ENCODE measurements at regions of chr17 and their contacts with region 1.

Region 1: DNA sequence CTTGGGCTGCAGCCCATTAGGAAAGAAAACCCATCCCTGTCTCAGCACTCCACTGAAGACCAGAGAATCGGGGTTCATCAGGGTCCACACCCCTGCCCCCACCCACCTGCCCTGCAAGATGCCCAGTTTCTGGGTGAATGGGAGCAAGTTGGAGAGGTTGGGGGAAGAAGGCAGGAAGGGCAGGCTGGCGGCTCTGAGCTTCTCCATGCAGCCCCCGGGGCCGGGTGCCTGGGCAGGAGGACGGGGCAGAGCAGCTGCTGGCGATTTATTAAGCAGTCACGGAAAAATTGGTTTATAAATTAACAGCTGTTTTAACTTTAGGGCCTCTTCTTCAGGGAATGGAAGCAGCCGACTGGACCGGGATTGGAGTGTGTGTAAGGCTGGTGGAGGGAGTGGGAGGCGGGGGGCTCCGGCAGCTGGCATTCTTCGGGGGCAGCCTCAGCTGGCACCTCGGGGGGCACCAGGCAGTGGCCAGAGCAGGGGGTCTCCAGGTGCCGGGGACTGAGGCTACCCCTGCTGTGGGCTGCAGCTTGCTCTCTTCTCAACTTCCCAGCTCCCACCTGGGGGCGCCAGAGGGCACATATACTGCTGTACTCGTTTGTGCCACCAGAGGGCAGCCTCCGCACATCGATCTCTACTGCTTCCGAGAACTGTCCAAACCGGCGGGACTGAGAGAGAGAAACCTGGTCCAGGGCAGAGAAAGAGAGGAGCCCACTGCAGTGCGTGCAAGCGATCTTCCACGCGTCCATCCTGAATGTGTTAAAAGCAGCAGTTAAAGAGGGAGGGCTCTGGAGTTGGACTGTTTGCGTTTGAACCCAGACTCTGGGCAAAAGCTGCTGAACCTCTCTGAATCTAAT is 5.0 kb upstream of the PPP1R1B start:
- DNase-seq: peak; percentile 100
- H3K4me3 Mint-ChIP-seq: peak overlapping the region; percentile 18
- H3K27ac Mint-ChIP-seq: peak overlapping the region; percentile 3
- H3K4me1 Mint-ChIP-seq: peaks cover 55% of the 10 kb centered on the region
- H3K27me3 Mint-ChIP-seq: peaks cover 83% of the 10 kb centered on the region
- CTCF ChIP-seq: no peak

Region 2: DNA sequence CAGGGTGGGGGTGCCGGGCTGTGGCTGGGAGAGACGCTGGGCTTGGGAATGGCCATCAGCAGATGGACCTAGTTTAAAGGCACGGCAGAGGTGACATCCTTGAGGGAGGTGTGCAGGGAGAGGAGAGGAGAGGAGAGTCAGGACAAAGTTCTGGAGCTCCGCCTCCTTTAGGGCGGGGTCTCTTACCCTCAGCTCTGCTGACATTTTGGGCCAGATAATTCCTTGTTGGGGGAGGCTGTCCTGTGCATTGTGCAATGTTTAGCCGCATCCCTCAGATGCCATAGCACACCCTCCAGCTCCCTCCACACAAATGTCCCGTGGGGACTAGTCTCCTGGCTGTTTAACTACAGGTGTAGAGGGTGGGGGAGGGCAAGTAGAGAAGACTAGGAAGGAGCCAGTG is 1145.2 kb before region 1 on chr17:
- CTCF ChIA-PET with region 1: no interaction called
- intact Hi-C with region 1: no loop called
- DNase-seq: no peak
- H3K4me3 Mint-ChIP-seq: no peak overlapping the region
- H3K27ac Mint-ChIP-seq: no peak overlapping the region
- H3K4me1 Mint-ChIP-seq: peaks cover 11% of the 10 kb centered on the region
- H3K27me3 Mint-ChIP-seq: no peaks in the 10 kb centered on the region
- CTCF ChIP-seq: no peak

Region 3: GRCh38 chr17:39209317-39210092 is 412.2 kb before region 1 on chr17:
- CTCF ChIA-PET with region 1: interaction called, 4 read pairs
- intact Hi-C with region 1: loop called (anchors 1 kb)
- DNase-seq: peak; percentile 81
- H3K4me3 Mint-ChIP-seq: peak overlapping the region; percentile 55
- H3K27ac Mint-ChIP-seq: peak overlapping the region; percentile 16
- H3K4me1 Mint-ChIP-seq: peaks cover 43% of the 10 kb centered on the region
- H3K27me3 Mint-ChIP-seq: peaks cover 63% of the 10 kb centered on the region
- CTCF ChIP-seq: peak; percentile 13

Region 4: DNA sequence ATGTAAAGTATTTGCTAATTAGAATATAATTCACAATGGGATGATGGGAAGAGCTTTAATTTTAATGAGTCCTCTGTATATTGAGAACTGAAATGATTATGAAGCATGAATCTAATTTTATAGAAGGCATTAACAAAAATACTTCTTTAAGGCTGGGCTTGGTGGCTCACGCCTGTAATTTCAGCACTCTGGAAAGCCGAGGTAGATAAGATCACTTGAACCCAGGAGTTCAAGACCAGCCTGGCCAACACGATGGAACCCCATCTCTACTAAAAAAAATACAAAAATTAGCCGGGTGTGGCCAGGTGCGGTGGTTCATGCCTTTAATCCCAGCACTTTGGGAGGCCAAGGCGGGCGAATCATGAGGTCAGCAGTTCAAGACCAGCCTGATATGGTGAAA is 148.4 kb before region 1 on chr17:
- CTCF ChIA-PET with region 1: no interaction called
- intact Hi-C with region 1: no loop called
- DNase-seq: no peak
- H3K4me3 Mint-ChIP-seq: no peak overlapping the region
- H3K27ac Mint-ChIP-seq: no peak overlapping the region
- H3K4me1 Mint-ChIP-seq: no peaks in the 10 kb centered on the region
- H3K27me3 Mint-ChIP-seq: no peaks in the 10 kb centered on the region
- CTCF ChIP-seq: no peak

Region 5: GRCh38 chr17:39668199-39668966 is 46.6 kb after region 1 on chr17 and contains the start of gene PNMT:
- CTCF ChIA-PET with region 1: interaction called, 42,089 read pairs
- intact Hi-C with region 1: loop called (anchors 1 kb)
- DNase-seq: peak; percentile 100
- H3K4me3 Mint-ChIP-seq: peak within 1 kb of the TSS; percentile 24
- H3K27ac Mint-ChIP-seq: peak within 1 kb of the TSS; percentile 0
- H3K4me1 Mint-ChIP-seq: peaks cover 65% of the 10 kb centered on the region
- H3K27me3 Mint-ChIP-seq: peaks cover 69% of the 10 kb centered on the region
- CTCF ChIP-seq: no peak
- total RNA-seq, gene PNMT: 1.3 and 3.2 TPM in 2 replicates

Region 6: DNA sequence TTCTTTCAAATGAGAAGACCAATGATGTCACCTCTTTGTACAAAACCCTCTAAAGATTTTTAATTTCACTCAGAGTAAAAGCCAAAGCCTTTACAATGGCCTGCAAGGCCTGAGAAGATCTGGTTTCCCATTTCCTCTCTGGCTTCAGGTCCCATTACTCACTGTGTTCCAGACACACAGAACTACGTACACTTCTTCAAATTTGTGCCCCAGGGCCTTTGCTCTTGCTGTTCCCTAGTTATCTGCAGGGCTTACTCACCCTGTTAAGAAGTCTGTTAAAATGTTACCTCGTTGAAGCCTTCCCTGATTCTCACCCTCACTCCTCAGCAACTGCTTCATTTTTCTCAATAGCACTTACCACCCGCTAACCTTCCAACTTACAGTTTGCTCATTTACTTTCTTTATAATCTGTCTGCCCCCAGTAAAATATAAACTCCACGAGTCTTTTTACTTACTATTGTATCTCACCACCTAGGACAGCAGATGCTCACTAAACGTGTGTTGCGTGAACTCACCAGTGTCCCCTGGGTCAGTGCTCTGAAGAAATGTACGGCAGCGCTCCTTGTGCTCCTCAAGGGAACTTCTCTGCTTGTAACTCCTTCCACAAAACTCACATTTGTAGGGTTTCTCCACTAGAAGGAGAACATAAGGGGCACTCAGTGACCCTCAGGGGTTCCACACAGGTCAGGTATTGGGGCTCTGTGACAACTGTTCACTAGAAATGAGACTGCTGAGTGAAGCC is 166.2 kb after region 1 on chr17:
- CTCF ChIA-PET with region 1: interaction called, 1,121 read pairs
- intact Hi-C with region 1: no loop called
- DNase-seq: peak; percentile 80
- H3K4me3 Mint-ChIP-seq: no peak overlapping the region
- H3K27ac Mint-ChIP-seq: no peak overlapping the region
- H3K4me1 Mint-ChIP-seq: peaks cover 29% of the 10 kb centered on the region
- H3K27me3 Mint-ChIP-seq: no peaks in the 10 kb centered on the region
- CTCF ChIP-seq: no peak

Region 7: GRCh38 chr17:39863918-39864746 is 242.4 kb after region 1 on chr17 and contains the start of gene IKZF3:
- CTCF ChIA-PET with region 1: interaction called, 259 read pairs
- intact Hi-C with region 1: loop called (anchors 1 kb)
- DNase-seq: peak; percentile 100
- H3K4me3 Mint-ChIP-seq: peak within 1 kb of the TSS; percentile 67
- H3K27ac Mint-ChIP-seq: peak within 1 kb of the TSS; percentile 31
- H3K4me1 Mint-ChIP-seq: peaks cover 38% of the 10 kb centered on the region
- H3K27me3 Mint-ChIP-seq: peaks cover 53% of the 10 kb centered on the region
- CTCF ChIP-seq: no peak
- total RNA-seq, gene IKZF3: 30.9 and 41.0 TPM in 2 replicates

Region 8: GRCh38 chr17:40015005-40015997 is 393.6 kb after region 1 on chr17 and contains the start of gene CSF3:
- CTCF ChIA-PET with region 1: interaction called, 113 read pairs
- intact Hi-C with region 1: no loop called
- DNase-seq: peak; percentile 66
- H3K4me3 Mint-ChIP-seq: no peak within 1 kb of the TSS
- H3K27ac Mint-ChIP-seq: no peak within 1 kb of the TSS
- H3K4me1 Mint-ChIP-seq: peaks cover 10% of the 10 kb centered on the region
- H3K27me3 Mint-ChIP-seq: peaks cover 74% of the 10 kb centered on the region
- CTCF ChIP-seq: no peak
- total RNA-seq, gene CSF3: 0.38 TPM in 1 of 2 replicates, not detected in the other

Region 9: DNA sequence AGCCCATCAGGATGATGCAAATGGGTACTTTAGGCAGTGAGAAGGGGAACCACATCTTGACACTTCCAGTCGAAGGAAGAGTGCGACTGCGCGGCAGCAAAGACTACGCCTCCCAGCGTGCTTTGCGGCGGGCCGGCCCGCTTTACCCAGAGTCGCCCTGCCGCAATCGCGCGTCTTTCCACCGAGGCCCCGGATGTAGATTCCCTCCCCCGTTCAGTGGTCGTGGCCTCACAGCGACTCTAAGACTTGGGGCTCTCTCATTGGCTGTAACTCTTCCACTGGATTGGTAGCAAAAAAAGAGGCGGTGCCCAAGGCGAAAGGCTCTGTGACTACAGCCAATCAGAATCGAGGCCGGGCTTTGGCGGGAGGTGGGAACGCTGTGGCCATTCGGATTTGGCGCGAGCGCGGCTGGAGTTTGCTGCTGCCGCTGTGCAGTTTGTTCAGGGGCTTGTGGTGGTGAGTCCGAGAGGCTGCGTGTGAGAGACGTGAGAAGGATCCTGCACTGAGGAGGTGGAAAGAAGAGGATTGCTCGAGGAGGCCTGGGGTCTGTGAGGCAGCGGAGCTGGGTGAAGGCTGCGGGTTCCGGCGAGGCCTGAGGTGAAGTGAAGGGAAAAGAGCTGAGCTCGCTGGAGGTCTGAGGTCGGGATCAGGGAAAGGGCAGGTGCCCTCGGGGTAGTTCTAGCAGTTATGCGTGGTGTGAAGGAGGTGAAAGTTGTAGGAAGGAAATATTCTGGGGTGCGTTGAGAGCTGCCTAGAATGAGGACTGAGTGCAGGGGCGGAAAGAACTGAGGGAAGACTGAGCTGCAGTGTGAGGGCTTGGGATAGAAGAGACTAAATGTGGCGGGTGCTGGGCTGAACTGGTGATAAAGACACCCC is 666.0 kb after region 1 on chr17 and contains the start of gene CDC6:
- CTCF ChIA-PET with region 1: interaction called, 11 read pairs
- intact Hi-C with region 1: no loop called
- DNase-seq: peak; percentile 100
- H3K4me3 Mint-ChIP-seq: peak within 1 kb of the TSS; percentile 83
- H3K27ac Mint-ChIP-seq: peak within 1 kb of the TSS; percentile 90
- H3K4me1 Mint-ChIP-seq: peaks cover 71% of the 10 kb centered on the region
- H3K27me3 Mint-ChIP-seq: no peaks in the 10 kb centered on the region
- CTCF ChIP-seq: no peak
- total RNA-seq, gene CDC6: 567 and 645 TPM in 2 replicates